ENCODE measurements at regions of chr19 and their contacts with region 1.

Region 1: GRCh38 chr19:23249911-23250649 is at the start of gene ZNF724:
- DNase-seq: peak; percentile 97
- ATAC-seq: peak; percentile 99
- H3K4me3 ChIP-seq: peak within 1 kb of the TSS; percentile 77 to 88 (median 81)
- H3K27ac ChIP-seq: peak within 1 kb of the TSS; percentile 90
- H3K4me1 ChIP-seq: peaks cover 31% of the 10 kb centered on the region
- H3K27me3 ChIP-seq: no peaks in the 10 kb centered on the region
- CTCF ChIP-seq: no peak
- EP300 ChIP-seq: no peak
- POLR2A ChIP-seq: peak; percentile 68 to 84
- RAD21 ChIP-seq: no peak
- total RNA-seq, gene ZNF724: 15.0 and 19.8 TPM in 2 replicates

Region 2: GRCh38 chr19:23145617-23146415 is 104.3 kb before region 1 on chr19:
- CTCF ChIA-PET with region 1: no interaction called
- POLR2A ChIA-PET with region 1: no interaction called
- in situ Hi-C with region 1: no loop called
- intact Hi-C with region 1: no loop called
- DNase-seq: no peak
- ATAC-seq: no peak
- H3K4me3 ChIP-seq: no peak overlapping the region
- H3K27ac ChIP-seq: no peak overlapping the region
- H3K4me1 ChIP-seq: no peaks in the 10 kb centered on the region
- H3K27me3 ChIP-seq: no peaks in the 10 kb centered on the region; a peak in 1 of 5 replicates
- CTCF ChIP-seq: no peak
- EP300 ChIP-seq: no peak
- POLR2A ChIP-seq: no peak
- RAD21 ChIP-seq: no peak

Region 3: GRCh38 chr19:23222998-23223652 is 27.0 kb before region 1 on chr19:
- CTCF ChIA-PET with region 1: no interaction called
- POLR2A ChIA-PET with region 1: no interaction called
- in situ Hi-C with region 1: no loop called
- intact Hi-C with region 1: no loop called
- DNase-seq: peak; percentile 0
- ATAC-seq: no peak
- H3K4me3 ChIP-seq: no peak overlapping the region
- H3K27ac ChIP-seq: no peak overlapping the region
- H3K4me1 ChIP-seq: no peaks in the 10 kb centered on the region
- H3K27me3 ChIP-seq: no peaks in the 10 kb centered on the region
- CTCF ChIP-seq: no peak
- EP300 ChIP-seq: no peak
- POLR2A ChIP-seq: no peak
- RAD21 ChIP-seq: no peak

Region 4: DNA sequence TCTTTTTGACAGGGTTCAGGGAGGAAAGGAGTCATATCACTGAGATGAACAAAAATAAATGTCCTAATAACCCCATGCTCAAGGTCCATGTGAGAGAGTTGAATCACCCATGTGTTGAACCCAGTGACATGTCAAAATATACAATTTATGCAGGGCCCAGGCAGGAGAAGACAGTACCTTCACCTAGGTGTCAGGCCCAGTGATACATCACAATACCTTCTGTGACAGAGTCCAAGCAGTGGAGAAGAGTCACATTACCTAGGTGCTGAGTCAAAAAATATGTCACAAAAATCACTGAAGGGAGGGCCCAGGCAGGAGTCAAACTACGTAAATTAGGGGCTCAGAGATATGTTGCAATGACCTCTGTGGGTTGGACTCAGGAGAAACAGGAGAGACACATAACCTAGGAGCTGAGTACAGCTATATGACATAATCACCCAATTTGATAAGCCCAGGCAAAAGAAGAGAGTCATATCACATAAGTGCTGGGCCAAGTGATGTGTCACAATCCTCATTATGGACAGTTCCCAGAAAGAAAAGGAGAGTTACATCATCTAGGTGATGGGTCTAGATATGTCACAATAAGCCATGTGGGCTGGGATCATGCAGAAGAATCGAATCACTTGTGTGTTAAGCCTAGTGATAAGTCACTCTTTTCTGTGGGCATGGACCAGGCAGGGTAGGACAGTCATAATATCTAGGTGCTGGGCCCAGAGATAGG is 13.9 kb after region 1 on chr19:
- CTCF ChIA-PET with region 1: no interaction called
- POLR2A ChIA-PET with region 1: interaction called, 5 read pairs
- in situ Hi-C with region 1: no loop called
- intact Hi-C with region 1: loop called (anchors 1 kb)
- DNase-seq: no peak
- ATAC-seq: no peak
- H3K4me3 ChIP-seq: no peak overlapping the region
- H3K27ac ChIP-seq: no peak overlapping the region
- H3K4me1 ChIP-seq: peaks cover 34% of the 10 kb centered on the region
- H3K27me3 ChIP-seq: no peaks in the 10 kb centered on the region
- CTCF ChIP-seq: no peak
- EP300 ChIP-seq: no peak
- POLR2A ChIP-seq: no peak; a peak in 1 of 4 replicates
- RAD21 ChIP-seq: no peak